Left cardiac atrium (tissue), 4 donors: ENCODE measurements at regions of chr22 and their contacts with region 1.

Region 1: DNA sequence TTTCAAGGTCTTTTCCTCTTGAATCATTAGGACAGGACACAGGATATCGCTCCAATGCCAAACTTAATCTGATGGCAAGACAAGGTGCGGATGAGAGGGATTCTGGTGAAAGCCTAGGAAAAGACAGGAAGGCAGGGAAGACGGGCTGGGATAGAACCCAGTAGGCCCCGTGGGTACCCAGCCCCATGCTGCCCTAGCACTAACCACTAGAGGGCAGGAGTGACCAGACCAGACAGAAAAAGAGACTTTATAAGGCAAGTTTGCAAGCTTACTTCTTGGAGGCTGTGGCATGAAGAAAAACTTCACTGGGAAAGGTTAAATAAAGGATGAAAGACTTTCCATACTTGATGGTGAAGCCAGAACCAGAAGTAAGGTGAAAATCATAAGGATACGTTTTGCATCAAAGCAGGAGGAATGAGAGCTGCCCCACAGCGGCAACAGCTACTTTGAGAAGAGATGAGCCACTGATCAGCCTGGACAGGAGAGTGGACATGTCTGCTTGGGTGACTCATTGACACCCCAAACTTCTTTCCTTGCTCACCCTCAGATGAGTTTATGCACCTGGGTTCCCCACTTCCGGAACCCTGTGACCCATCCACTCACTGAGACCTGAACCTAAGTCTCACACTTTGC is 39.8 kb downstream of the SYN3 start:
- DNase-seq: peak; percentile 58
- ATAC-seq: peak; percentile 67 to 88

Region 2: GRCh38 chr22:33049119-33049729 is 30.9 kb after region 1 on chr22:
- intact Hi-C with region 1: loop called in 1 of 2 experiments (anchors 2 kb)
- DNase-seq: peak; percentile 81
- ATAC-seq: peak; percentile 82 to 92

Region 3: DNA sequence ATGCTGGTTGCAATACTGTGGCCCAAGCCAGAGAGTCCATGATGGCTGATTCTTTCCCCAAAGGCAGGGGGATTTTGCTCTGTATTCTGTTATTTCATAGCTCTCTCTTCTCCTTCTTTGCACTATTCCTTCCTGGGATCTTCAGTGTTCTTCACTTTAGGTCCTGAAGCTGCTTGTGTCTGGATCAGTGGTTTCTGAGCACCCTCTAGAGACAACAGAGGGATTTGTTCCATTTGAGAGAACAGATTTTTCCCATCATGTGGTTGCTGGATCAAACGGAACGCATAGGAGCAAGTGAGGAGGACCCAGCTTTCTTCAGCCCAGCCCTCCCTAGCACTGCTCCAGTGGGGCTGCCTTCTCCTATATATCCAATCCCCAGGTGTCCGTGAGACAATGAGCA is 108.5 kb after region 1 on chr22:
- intact Hi-C with region 1: loop called in 1 of 2 experiments (anchors 2 kb)
- DNase-seq: no peak
- ATAC-seq: peak in 1 of 2 donors; percentile 37

Region 4: GRCh38 chr22:33202455-33202854 is 184.1 kb after region 1 on chr22:
- intact Hi-C with region 1: loop called in 1 of 2 experiments (anchors 5 kb)
- DNase-seq: no peak
- ATAC-seq: no peak